ENCODE measurements at regions of chr5 and their contacts with region 1.

Region 1: GRCh38 chr5:82225525-82226172 is 52.5 kb downstream of the RPS23 start:
- DNase-seq: peak; percentile 35 to 74 (median 56)
- ATAC-seq: peak; percentile 90
- H3K4me3 ChIP-seq: no peak overlapping the region
- H3K4me3 Mint-ChIP-seq: no peak overlapping the region
- H3K27ac ChIP-seq: no peak overlapping the region
- H3K27ac Mint-ChIP-seq: no peak overlapping the region
- H3K4me1 ChIP-seq: peaks cover 3% of the 10 kb centered on the region
- H3K4me1 Mint-ChIP-seq: peaks cover 3% of the 10 kb centered on the region
- H3K27me3 ChIP-seq: no peaks in the 10 kb centered on the region
- H3K27me3 Mint-ChIP-seq: no peaks in the 10 kb centered on the region
- CTCF ChIP-seq: peak; percentile 75

Region 2: GRCh38 chr5:81425569-81425968 is 800.1 kb before region 1 on chr5:
- CTCF ChIA-PET with region 1: interaction called, 12 read pairs
- POLR2A ChIA-PET with region 1: no interaction called
- intact Hi-C with region 1: loop called (anchors 1 kb)
- DNase-seq: peak in 2 of 9 experiments; percentile 42 to 57
- ATAC-seq: peak; percentile 49
- H3K4me3 ChIP-seq: no peak overlapping the region
- H3K4me3 Mint-ChIP-seq: no peak overlapping the region
- H3K27ac ChIP-seq: no peak overlapping the region
- H3K27ac Mint-ChIP-seq: no peak overlapping the region
- H3K4me1 ChIP-seq: no peaks in the 10 kb centered on the region
- H3K4me1 Mint-ChIP-seq: peaks cover 7% of the 10 kb centered on the region
- H3K27me3 ChIP-seq: no peaks in the 10 kb centered on the region
- H3K27me3 Mint-ChIP-seq: no peaks in the 10 kb centered on the region
- CTCF ChIP-seq: peak; percentile 71

Region 3: DNA sequence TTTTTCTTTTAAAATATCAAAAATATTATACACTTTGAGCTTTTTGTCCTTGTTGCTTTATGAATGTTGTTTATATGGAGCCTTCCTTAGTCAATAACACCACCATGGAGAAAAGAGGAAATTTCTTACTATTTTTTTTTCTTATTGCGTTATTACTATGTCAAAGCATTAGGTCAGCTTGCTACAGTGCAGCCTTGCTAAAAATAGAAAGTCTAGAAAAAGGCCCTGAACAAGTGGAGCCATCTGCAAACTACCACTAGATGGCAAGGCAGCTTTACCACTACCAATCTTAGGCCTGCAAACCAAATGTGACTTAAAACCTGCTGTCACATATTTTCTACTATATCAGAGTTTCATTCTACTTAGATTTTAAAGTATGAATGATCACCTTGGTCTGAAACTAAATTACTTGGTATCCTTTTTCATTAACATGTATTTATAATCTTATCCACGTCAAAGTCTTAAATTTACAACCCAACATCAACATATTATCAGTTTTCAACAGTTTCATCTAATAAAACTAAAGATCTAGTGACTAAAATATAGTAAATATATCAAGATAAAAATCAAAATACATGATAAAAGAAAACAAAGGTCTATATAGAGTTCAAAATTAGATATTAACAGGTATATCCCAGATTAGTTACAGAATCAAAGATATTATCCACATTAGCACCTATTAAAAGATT is 718.6 kb before region 1 on chr5:
- CTCF ChIA-PET with region 1: interaction called, 5 read pairs
- POLR2A ChIA-PET with region 1: no interaction called
- intact Hi-C with region 1: loop called (anchors 1 kb)
- DNase-seq: peak in 7 of 9 experiments; percentile 2 to 72 (median 28)
- ATAC-seq: peak; percentile 65
- H3K4me3 ChIP-seq: no peak overlapping the region
- H3K4me3 Mint-ChIP-seq: no peak overlapping the region
- H3K27ac ChIP-seq: no peak overlapping the region
- H3K27ac Mint-ChIP-seq: no peak overlapping the region
- H3K4me1 ChIP-seq: no peaks in the 10 kb centered on the region
- H3K4me1 Mint-ChIP-seq: no peaks in the 10 kb centered on the region
- H3K27me3 ChIP-seq: no peaks in the 10 kb centered on the region
- H3K27me3 Mint-ChIP-seq: no peaks in the 10 kb centered on the region
- CTCF ChIP-seq: peak; percentile 66

Region 4: DNA sequence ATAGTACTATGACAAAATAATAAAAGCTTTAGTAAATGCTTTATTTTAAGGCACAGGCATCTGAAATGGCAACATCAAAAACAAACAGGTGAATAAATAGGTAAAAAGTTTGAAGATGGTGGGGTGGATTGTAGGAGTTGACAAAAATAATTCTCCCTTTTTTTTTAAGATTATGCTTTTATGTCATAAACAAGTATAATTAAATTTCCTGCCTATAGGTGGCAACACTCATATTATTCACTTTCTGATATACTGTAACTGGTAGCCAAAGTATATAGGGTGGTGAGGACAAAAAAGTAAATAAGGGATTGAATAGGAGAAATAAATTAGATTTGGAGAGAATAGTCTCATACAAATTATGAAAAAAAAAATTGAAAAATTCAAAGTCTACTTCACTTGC is 711.7 kb before region 1 on chr5:
- CTCF ChIA-PET with region 1: interaction called, 5 read pairs
- POLR2A ChIA-PET with region 1: no interaction called
- intact Hi-C with region 1: loop called in 1 of 2 experiments (anchors 2 kb)
- DNase-seq: peak in 1 of 9 experiments; percentile 35
- ATAC-seq: peak; percentile 42
- H3K4me3 ChIP-seq: no peak overlapping the region
- H3K4me3 Mint-ChIP-seq: no peak overlapping the region
- H3K27ac ChIP-seq: no peak overlapping the region
- H3K27ac Mint-ChIP-seq: no peak overlapping the region
- H3K4me1 ChIP-seq: no peaks in the 10 kb centered on the region
- H3K4me1 Mint-ChIP-seq: no peaks in the 10 kb centered on the region
- H3K27me3 ChIP-seq: no peaks in the 10 kb centered on the region
- H3K27me3 Mint-ChIP-seq: no peaks in the 10 kb centered on the region
- CTCF ChIP-seq: peak; percentile 51

Region 5: DNA sequence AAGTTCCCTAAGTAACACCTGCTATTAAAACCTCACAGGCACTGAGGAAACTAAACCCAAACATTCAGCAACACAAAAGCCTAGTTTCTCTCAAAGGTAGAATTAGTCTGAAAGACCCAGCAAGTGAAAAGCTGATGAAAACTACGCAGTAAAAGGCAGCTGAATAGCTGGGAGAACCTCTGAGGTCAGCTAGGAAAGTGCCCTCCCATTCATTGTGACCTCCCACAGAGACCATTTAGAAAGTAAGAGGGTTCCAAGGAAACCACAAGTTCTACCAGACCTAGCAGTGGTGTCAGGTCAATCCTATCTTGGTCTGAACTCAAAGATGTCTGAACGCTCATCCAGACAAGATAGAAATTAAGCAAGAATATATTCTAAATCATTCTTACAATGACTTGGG is 619.5 kb before region 1 on chr5:
- CTCF ChIA-PET with region 1: no interaction called
- POLR2A ChIA-PET with region 1: no interaction called
- intact Hi-C with region 1: no loop called
- DNase-seq: no peak
- ATAC-seq: no peak
- H3K4me3 ChIP-seq: no peak overlapping the region
- H3K4me3 Mint-ChIP-seq: no peak overlapping the region
- H3K27ac ChIP-seq: no peak overlapping the region
- H3K27ac Mint-ChIP-seq: no peak overlapping the region
- H3K4me1 ChIP-seq: no peaks in the 10 kb centered on the region
- H3K4me1 Mint-ChIP-seq: peaks cover 10% of the 10 kb centered on the region
- H3K27me3 ChIP-seq: no peaks in the 10 kb centered on the region
- H3K27me3 Mint-ChIP-seq: no peaks in the 10 kb centered on the region
- CTCF ChIP-seq: no peak

Region 6: GRCh38 chr5:82174128-82174918 is 51.3 kb before region 1 on chr5:
- CTCF ChIA-PET with region 1: interaction called, 3 read pairs
- POLR2A ChIA-PET with region 1: no interaction called
- intact Hi-C with region 1: loop called in 1 of 2 experiments (anchors 5 kb)
- DNase-seq: peak; percentile 30 to 70 (median 55)
- ATAC-seq: peak; percentile 70
- H3K4me3 ChIP-seq: no peak overlapping the region
- H3K4me3 Mint-ChIP-seq: no peak overlapping the region
- H3K27ac ChIP-seq: no peak overlapping the region
- H3K27ac Mint-ChIP-seq: peak overlapping the region; percentile 19
- H3K4me1 ChIP-seq: no peaks in the 10 kb centered on the region
- H3K4me1 Mint-ChIP-seq: peaks cover 6% of the 10 kb centered on the region
- H3K27me3 ChIP-seq: no peaks in the 10 kb centered on the region
- H3K27me3 Mint-ChIP-seq: no peaks in the 10 kb centered on the region
- CTCF ChIP-seq: peak; percentile 60